ENCODE measurements at regions of chr15 and their contacts with region 1.

Region 1: DNA sequence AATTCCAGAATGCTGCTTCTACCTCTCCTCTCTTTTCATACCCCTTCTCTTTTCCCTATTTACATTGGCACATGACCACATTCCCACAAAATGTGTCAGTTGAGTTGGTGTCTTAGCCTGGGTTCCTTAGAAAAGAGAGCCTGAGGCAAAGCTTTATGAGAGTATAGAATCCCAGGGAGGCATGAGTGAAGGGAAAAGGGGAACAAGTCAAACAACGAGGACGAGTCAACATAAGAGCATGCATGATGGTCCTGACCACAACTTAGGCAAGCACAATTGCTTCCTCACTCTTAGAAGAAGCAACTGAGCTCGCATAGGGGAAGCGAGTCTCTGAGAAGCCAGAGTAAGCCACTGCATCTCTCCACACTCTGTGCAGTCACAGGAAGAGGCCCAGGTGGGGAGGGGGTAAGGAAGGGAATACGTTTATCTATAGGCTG is 15.4 kb upstream of the ZNF774 start:
- DNase-seq: peak in 1 of 2 donors; percentile 23
- ATAC-seq: peak in 1 of 2 donors; percentile 24
- H3K4me3 ChIP-seq: no peak overlapping the region
- H3K27ac ChIP-seq: no peak overlapping the region
- H3K4me1 ChIP-seq: no peaks in the 10 kb centered on the region
- H3K27me3 ChIP-seq: no peaks in the 10 kb centered on the region
- CTCF ChIP-seq: no peak
- POLR2A ChIP-seq: no peak

Region 2: DNA sequence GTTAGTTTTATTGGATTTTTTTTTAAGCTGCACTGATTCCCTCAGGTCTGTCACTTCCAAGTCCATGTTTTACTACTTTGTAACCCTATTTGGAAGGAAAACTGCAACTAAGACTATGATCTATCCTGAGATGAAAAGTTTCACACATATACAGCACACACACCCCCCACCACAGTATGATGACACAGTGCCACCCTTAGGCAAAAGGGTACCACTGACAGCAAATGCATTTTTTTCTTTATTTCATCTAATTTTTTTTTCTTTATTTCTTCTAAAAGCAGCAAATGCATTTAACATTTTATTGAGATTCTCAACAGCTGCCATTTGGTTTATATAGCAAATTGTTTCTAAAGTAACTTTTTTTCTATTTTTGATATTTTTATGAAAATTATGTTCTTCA is 50.0 kb before region 1 on chr15:
- in situ Hi-C with region 1: no loop called
- intact Hi-C with region 1: no loop called
- DNase-seq: no peak
- ATAC-seq: no peak
- H3K4me3 ChIP-seq: no peak overlapping the region
- H3K27ac ChIP-seq: no peak overlapping the region
- H3K4me1 ChIP-seq: no peaks in the 10 kb centered on the region
- H3K27me3 ChIP-seq: no peaks in the 10 kb centered on the region
- CTCF ChIP-seq: peak in 1 of 5 experiments; percentile 44
- POLR2A ChIP-seq: no peak

Region 3: DNA sequence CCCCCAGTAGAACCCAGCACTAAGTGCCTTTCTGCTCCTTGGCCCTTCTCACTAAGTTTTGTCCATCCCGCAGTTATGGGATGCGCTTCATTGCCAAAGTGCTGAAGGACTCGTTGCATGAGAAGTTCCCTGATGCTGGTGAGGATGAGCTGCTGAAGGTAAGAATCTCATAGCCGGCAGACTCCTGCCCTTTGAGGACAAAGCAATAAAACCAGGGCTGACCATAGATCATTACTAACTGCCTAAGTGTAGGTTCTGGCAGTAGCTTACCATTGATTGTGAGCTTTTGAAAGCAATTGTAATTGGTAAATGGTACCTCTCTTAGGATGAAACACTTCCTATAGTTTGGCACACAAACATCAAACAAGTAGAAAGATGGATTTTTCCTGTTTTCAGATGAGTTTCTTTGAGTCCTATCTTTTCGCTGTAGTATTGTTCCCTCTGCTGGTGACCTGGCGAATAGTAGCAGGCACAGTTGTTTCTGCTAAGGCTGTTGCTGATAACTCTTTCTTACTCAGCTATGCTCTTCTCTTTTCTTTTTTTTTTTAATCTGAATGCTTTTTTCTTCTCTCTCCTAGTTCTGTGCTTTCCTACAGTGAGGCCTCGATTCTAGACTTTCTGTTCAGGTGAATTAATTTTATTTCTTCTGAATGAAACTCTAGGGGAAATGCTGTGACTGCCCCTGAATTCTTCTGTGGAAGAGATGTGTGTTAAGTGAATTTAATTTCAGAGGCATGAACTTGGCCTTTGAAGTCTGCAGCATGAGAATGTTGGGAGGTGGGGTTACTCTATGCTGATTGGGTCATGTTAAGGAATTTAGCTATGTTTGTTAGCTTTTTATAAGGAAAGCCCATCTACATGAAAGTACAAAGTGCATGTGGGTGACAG is 145.6 kb after region 1 on chr15:
- in situ Hi-C with region 1: loop called in 1 of 4 experiments (anchors 25 kb)
- intact Hi-C with region 1: no loop called
- DNase-seq: no peak
- ATAC-seq: peak in 1 of 2 donors; percentile 35
- H3K4me3 ChIP-seq: no peak overlapping the region
- H3K27ac ChIP-seq: peak overlapping the region in 2 of 4 donors; percentile 11 to 44
- H3K4me1 ChIP-seq: no peaks in the 10 kb centered on the region
- H3K27me3 ChIP-seq: no peaks in the 10 kb centered on the region
- CTCF ChIP-seq: peak; percentile 57 to 75 (median 60)
- POLR2A ChIP-seq: no peak

Region 4: GRCh38 chr15:92306663-92307062 is 1969.9 kb after region 1 on chr15:
- in situ Hi-C with region 1: no loop called
- intact Hi-C with region 1: no loop called
- DNase-seq: no peak
- ATAC-seq: no peak
- H3K4me3 ChIP-seq: no peak overlapping the region
- H3K27ac ChIP-seq: no peak overlapping the region
- H3K4me1 ChIP-seq: no peaks in the 10 kb centered on the region
- H3K27me3 ChIP-seq: peaks cover 0 to 3% (median 0%) of the 10 kb centered on the region in 3 donors
- CTCF ChIP-seq: no peak
- POLR2A ChIP-seq: no peak